Posterior vena cava (tissue), 2 donors: ENCODE measurements at regions of chrX and their contacts with region 1.

Region 1: DNA sequence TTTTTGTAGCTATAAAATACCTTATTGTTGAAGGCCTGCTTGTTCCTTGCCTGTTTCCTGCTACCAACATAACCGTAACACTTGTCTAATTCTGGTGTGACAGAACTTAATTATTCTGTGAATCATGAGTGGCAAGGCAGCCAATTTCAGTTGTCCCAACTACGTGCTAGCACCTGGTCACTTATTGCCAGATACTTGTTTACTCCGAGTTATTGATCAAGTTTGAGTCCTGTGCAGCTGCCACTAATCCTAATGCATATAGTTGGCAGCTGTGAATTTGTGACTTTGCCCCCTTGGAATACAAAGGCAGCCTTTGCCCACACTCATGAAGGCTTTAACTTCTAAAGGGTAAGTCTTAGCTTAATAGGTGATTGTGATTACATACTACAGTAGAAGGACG is 7.8 kb upstream of the RNF128 start:
- DNase-seq: no peak

Region 2: GRCh38 chrX:106774981-106775380 is 56.3 kb after region 1 on chrX:
- intact Hi-C with region 1: no loop called
- DNase-seq: no peak

Region 3: DNA sequence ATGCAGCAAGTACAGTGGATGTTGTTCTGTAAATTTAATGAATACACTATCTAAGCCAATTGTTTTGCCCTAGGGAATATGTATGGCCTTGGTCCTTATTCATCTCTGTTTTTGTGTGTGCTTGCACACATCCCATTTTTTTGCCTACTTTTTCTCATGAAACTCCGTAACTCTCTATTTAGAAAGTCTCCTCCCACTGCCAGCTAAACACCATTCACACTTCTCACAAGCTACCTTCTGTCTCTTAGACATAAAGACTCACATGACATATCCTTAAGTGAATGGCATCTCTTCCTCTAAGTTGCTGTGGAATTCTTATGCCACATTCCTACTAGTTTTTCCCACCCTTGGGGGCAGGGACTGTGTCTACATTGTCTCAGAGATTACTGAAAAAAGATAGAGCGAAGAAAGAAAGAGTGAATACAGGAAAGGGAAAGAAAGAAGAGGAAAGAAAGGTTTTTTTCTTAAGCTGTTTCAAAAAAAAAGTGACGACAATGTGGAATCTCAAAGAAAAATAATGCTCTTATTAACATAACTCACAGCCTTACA is 1490.4 kb after region 1 on chrX:
- intact Hi-C with region 1: loop called in 1 of 2 experiments (anchors 5 kb)
- DNase-seq: no peak